Left cardiac atrium (tissue), 4 donors: ENCODE measurements at regions of chr19 and their contacts with region 1.

Region 1: DNA sequence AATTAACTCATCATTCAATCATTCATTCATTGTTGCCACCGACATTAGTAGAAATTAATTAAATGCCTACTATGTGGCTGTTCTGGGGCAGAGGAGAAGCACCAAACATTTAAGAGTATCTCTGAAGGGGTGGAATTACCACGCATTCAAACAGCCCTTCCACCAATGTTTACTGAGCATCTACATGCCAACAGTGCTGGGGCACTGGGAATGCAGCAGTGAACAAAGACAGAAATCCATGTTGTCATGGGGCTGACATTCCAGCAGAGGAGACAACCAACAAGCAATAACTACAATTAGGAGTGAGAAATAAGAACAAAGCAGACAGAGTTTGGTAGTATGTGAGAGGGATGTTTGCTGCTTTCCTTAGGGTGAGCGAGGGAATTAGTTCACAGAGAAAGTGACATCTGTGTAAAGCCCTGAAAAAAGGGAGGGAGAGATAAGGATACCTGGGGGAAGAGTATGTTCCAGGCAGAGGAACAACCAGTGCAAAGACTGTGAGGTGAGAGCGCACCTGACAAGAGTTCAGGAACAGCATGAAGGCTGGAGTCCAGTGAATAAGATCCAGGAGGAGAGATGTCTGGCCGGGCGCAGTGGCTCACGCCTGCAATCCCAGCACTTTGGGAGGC is 1.3 kb upstream of the PAK4 start:
- DNase-seq: no peak
- ATAC-seq: no peak

Region 2: DNA sequence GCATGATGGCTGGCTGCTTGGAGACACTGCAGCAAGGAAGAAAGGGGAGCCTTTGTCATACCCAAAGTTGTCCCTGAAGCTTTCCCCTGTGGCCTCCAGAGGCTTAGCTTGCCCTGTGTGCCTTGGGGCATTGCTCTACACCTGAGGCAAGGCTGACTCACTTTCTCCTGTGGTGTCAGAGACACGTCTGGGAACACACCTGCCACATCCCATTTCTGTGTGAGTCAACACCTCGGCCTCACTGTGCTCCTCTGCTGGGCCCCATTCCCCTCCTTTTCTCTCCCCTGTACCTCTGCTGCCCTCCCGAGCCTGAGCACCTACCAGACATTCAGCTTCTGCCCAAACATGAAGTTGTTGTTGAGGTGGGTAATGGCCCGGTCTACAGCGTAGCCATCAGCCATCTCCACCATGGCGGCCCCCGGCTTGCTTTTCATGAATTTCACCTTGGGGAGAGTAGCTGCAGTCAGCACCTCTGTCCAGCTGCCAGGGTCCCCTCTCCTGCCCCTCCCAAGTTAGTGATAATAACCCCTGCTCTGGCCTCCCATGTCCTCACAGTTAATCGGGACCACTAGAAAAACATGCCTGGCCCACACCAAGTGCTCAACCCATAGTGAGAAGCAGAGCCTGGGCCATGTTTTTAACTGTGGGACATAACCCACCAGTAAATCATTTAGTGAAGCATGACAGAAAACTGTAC is 285.5 kb before region 1 on chr19:
- intact Hi-C with region 1: no loop called
- DNase-seq: no peak
- ATAC-seq: no peak

Region 3: DNA sequence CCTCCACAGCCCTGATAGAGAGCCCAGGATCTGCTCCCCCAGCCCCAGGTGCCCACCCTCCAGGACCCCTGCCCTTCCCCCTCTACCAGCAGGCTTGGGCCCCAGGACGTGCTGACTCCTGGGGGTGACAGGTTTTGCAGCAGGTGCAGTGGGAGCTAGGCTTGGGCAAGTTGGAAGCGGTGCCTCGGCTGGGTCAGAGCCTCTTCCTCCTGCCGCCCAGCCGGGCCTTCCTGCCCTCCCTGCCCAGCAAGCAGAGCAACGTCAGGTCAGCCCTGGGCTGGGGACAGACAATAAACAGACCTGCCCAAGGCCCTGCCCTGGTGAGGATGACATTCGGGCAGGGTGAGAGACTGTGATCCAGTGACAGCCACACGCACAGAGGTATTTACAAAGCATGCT is 63.3 kb after region 1 on chr19:
- intact Hi-C with region 1: loop called (anchors 2 to 5 kb)
- DNase-seq: no peak
- ATAC-seq: peak in 1 of 2 donors; percentile 18

Region 4: DNA sequence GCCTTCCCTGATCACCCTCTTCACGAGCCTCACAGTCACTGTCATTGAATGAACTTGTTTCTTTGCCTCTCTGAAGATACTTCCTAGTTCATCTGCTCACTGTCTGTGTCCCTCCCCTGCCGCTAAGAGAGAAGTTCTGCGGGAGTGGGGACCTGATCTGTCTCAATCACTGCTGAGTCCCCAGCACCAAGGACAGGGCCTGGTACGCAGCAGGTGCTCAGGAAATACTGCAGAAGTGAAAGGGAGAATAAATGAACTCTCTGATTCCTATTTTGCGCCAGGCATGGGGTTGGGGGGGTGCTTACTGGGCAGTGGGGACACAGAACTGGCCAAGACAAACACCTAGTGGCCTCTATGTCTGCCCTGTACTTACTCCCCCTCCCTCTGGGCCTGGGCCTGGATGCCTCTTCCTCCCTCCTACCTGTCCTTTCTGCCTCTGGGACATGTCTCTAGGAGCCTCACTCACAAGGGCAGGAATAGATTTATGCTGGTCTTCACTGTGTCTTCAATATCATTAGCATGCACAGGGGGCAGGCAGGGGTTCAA is 792.7 kb after region 1 on chr19:
- intact Hi-C with region 1: no loop called
- DNase-seq: no peak
- ATAC-seq: no peak